ENCODE measurements at regions of chr10 and their contacts with region 1.

Region 1: DNA sequence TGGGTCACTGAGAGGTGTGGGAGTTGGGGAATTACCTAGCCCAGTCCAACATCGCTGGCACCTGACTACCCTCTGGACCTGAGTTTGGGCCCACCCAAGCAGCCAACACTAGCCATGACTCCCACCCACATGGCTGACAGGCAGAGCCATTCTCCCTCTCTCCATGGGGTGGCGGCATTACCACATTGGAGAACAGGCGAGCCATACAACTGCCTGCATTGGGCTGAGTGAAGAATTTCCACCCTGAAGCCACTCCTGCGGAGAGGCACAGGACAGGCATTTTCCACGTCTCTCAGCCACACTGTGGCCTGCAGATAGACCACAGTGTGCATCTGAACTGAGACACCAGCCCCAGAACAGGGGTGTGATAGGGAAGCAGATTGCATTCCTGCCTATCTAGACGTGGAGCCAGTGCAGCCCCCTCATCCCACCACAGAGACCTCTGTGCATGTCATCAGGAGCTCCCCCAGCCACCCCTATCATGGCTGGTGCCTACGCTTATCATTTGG is 58.2 kb upstream of the ANTXRL start:
- DNase-seq: peak; percentile 84
- ATAC-seq: peak; percentile 89
- H3K4me3 Mint-ChIP-seq: no peak overlapping the region
- H3K27ac Mint-ChIP-seq: no peak overlapping the region
- H3K4me1 Mint-ChIP-seq: peaks cover 6% of the 10 kb centered on the region
- H3K27me3 Mint-ChIP-seq: no peaks in the 10 kb centered on the region
- CTCF ChIP-seq: peak; percentile 25; the same call in 1 of the 2 replicates

Region 2: DNA sequence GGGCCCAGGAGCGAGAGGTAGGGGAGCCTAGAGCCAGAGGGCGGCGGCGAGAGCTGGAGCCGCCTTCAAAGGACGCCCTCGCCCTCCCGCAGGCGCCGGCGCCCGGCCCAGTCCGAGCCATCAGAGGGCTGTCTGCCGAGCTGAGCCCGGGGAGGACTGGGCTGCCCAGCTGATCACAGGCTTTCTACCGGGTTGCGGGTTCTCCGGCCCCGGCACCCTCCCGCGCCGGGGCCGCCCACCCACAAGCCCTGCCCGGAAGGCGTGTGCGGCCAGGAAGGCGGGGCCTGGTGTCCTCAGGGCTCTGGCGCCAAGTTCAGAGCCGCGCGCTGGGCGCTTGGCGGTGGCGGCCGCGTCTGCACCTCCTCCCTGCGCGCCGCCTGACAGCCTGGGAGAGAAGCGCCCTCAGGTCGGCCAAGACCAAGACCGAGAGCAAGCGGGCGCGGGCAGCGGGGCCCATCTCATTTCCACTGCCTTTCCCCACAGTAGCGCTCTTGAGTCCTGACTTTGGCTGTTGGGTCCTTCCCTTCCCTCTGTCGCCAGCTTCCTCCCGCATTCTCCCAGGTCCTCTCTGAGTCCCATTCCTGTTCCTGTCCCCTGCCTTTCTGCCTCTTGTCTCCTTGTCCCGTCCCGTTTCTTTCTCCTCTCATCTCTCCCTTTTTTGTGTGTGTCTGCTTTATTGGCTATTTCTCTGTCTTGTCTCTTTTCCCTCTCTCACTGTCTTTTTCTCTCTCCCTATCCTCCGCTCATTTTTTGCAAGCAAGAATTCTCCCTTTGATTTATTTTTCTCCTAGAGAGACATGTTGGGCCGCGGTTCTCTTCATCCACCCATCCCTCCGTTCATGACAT is 122.0 kb before region 1 on chr10:
- CTCF ChIA-PET with region 1: no interaction called
- POLR2A ChIA-PET with region 1: no interaction called
- DNase-seq: peak; percentile 75
- ATAC-seq: peak; percentile 94
- H3K4me3 Mint-ChIP-seq: peak overlapping the region; percentile 75
- H3K27ac Mint-ChIP-seq: no peak overlapping the region
- H3K4me1 Mint-ChIP-seq: peaks cover 19% of the 10 kb centered on the region
- H3K27me3 Mint-ChIP-seq: peaks cover 38% of the 10 kb centered on the region
- CTCF ChIP-seq: no peak

Region 3: DNA sequence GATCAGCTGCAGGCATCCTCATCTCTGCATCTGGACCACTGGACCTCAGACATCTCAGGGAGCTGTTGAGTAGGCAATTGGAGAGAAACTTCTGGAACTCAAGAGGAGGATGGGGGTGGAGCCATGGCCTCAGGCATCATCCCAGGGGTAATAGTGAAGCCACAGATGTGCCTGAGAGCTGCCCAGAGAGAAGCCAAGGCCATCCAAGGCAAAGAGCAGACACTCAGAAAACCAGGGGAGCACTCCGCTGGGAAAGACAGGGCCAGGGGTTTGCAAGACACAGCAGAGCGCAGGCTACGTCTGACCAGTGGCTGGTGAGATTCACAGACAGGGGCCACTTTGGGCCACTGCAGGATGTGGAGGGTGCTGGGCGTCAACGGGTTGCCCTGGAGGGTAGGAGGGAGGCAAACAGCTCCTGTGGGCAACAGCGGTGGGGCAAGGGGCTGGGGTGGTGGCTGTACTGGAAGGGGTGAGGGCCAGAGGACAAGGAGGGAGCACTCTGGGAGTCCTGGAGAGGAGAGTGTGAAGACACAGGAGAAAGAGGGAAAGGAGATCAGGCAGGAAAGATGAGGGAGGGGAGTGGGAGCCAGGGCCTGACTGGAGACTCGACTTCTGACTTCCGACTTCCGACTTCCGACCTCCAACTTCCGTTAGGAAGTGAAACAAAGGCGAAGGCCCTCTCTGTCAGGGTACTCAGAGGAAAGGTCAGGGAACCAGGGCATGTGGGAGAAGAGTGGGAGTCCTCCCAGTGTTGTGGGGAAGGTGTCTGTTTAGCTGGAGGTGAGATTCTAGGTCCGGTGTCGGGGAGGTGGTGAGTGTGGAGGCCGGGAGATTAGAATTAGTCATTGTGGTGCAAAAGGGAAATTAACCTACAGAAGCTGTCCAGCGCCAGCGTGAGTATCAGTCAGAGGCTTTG is 11.5 kb before region 1 on chr10:
- CTCF ChIA-PET with region 1: interaction called, 14 read pairs
- POLR2A ChIA-PET with region 1: no interaction called
- DNase-seq: no peak
- ATAC-seq: no peak
- H3K4me3 Mint-ChIP-seq: no peak overlapping the region
- H3K27ac Mint-ChIP-seq: peak overlapping the region; percentile 49; the same call in 1 of the 2 replicates
- H3K4me1 Mint-ChIP-seq: 0 out of 2 replicates have a peak, but pooled peaks cover 3% of the 10 kb centered on the region
- H3K27me3 Mint-ChIP-seq: peaks cover 4% of the 10 kb centered on the region; the same call in 1 of the 2 replicates
- CTCF ChIP-seq: no peak